MCF 10A (cell line): ENCODE measurements at regions of chr10 and their contacts with region 1.

Region 1: GRCh38 chr10:82811621-82812020 is 936.6 kb downstream of the NRG3 start:
- DNase-seq: peak; percentile 48
- H3K4me3 Mint-ChIP-seq: no peak overlapping the region
- H3K27ac Mint-ChIP-seq: no peak overlapping the region
- H3K4me1 Mint-ChIP-seq: peaks cover 9% of the 10 kb centered on the region
- H3K27me3 Mint-ChIP-seq: no peaks in the 10 kb centered on the region
- CTCF ChIP-seq: peak; percentile 29

Region 2: GRCh38 chr10:81564143-81564542 is 1247.5 kb before region 1 on chr10:
- CTCF ChIA-PET with region 1: no interaction called
- POLR2A ChIA-PET with region 1: no interaction called
- intact Hi-C with region 1: loop called (anchors 5 kb)
- DNase-seq: no peak
- H3K4me3 Mint-ChIP-seq: no peak overlapping the region
- H3K27ac Mint-ChIP-seq: no peak overlapping the region
- H3K4me1 Mint-ChIP-seq: no peaks in the 10 kb centered on the region
- H3K27me3 Mint-ChIP-seq: no peaks in the 10 kb centered on the region
- CTCF ChIP-seq: no peak

Region 3: GRCh38 chr10:82969405-82969804 is 157.8 kb after region 1 on chr10:
- CTCF ChIA-PET with region 1: interaction called, 5 read pairs
- POLR2A ChIA-PET with region 1: no interaction called
- intact Hi-C with region 1: loop called (anchors 5 kb)
- DNase-seq: peak; percentile 24
- H3K4me3 Mint-ChIP-seq: no peak overlapping the region
- H3K27ac Mint-ChIP-seq: no peak overlapping the region
- H3K4me1 Mint-ChIP-seq: no peaks in the 10 kb centered on the region
- H3K27me3 Mint-ChIP-seq: no peaks in the 10 kb centered on the region
- CTCF ChIP-seq: peak; percentile 50

Region 4: DNA sequence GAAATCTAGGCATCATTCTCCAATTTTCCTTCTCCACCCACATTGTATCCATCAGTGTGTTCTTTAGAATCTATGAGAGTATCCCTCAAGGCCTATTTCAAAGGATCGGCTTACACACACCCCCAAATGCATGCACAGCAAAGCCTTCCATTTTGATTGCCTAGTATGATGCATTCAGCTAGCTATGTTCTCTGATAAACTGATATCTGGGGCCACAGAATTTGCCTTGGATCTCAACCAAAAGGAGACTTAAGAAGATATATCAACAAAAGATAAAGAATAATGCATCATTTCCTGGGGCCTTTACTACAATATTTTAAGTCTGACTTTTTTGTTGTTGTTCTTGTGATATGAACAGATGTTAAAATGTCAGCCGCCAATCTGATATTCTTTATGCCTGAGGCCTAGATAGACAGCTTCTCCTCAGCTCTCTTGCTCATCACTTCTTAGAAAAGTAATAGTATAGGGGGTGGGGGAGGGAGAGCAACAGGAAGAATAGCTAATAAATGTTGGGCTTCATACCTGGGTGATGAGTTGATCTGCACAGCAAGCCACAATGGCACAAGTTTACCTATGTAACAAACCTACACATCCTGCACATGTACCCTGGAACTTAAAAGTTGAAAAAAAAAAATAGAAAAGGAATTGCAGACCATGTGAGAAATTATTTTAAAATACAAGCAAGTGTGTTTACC is 534.7 kb after region 1 on chr10:
- CTCF ChIA-PET with region 1: no interaction called
- POLR2A ChIA-PET with region 1: no interaction called
- intact Hi-C with region 1: no loop called
- DNase-seq: no peak
- H3K4me3 Mint-ChIP-seq: no peak overlapping the region
- H3K27ac Mint-ChIP-seq: no peak overlapping the region
- H3K4me1 Mint-ChIP-seq: peaks cover 9% of the 10 kb centered on the region
- H3K27me3 Mint-ChIP-seq: no peaks in the 10 kb centered on the region
- CTCF ChIP-seq: no peak